AG04449 (cell line): ENCODE measurements at regions of chr15 and their contacts with region 1.

Region 1: DNA sequence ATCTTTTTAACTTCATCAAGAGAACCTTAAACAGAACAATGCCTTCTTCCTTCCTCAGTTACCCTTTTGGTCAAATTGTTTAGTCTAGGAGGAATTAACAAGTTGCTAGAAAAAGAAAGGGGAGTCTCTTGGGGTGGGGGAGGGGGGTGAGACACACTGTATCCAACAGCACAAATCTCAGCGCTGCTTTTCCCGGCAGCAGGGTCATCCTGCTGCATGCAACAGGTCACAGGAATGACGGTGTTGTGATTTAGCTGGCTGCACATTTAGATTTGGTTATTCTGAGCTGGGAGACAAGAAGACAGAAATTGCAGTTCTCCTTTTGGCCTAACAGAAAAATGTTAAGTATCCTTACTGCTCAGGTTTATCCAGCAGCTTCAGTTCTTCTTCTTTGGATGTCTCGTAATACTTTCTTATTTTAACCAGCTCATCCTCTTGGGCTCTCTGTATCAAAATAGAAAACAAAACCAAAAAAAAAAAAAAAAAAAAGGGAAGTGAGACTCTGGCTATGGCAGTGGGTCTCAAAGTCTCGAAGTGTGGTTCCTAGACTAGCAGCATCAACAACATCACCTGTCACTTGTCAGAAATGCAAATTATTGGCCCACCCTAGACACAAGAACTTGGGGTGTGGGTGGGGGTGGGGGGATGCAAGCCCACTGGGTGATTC is 190.5 kb downstream of the GREM1 start:
- DNase-seq: no peak
- H3K4me3 ChIP-seq: no peak overlapping the region
- CTCF ChIP-seq: no peak

Region 2: GRCh38 chr15:32919749-32920414 is 11.6 kb after region 1 on chr15:
- CTCF ChIA-PET with region 1: interaction called, 13 read pairs
- POLR2A ChIA-PET with region 1: interaction called, 3 read pairs
- DNase-seq: peak; percentile 100
- H3K4me3 ChIP-seq: no peak overlapping the region
- CTCF ChIP-seq: no peak